ENCODE measurements at regions of chr7 and their contacts with region 1.

Region 1: DNA sequence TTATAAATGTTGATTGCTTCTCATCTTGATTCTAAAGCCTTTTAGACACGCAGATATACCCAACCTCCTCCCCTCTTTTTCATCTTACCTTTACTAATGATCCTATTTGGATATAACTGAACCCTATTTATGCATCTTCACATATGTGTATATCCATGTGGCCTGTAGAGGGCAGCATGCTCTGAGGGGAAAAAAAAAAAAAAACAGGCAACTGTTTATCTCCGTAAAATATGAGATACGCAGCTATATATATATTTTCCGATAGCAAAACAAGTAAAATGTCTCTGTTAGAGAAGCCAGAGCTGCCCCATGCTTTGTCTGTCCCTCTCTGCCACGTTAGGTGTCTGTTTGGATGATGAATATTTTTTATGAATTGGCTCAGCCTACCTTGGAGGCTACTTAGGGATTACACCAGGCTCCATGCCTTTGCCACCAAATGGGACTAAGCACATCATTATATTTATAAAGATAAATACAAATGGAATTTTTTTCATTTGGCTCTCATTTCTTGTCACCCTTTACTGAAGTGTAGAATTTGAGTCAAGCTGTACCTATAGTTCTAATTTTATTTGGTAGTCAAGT is 174.8 kb upstream of the FZD1 start:
- DNase-seq: peak; percentile 85
- H3K4me3 ChIP-seq: no peak overlapping the region
- H3K27ac ChIP-seq: peak overlapping the region; percentile 89
- H3K4me1 ChIP-seq: peaks cover 83% of the 10 kb centered on the region
- H3K27me3 ChIP-seq: no peaks in the 10 kb centered on the region
- CTCF ChIP-seq: peak; percentile 91

Region 2: DNA sequence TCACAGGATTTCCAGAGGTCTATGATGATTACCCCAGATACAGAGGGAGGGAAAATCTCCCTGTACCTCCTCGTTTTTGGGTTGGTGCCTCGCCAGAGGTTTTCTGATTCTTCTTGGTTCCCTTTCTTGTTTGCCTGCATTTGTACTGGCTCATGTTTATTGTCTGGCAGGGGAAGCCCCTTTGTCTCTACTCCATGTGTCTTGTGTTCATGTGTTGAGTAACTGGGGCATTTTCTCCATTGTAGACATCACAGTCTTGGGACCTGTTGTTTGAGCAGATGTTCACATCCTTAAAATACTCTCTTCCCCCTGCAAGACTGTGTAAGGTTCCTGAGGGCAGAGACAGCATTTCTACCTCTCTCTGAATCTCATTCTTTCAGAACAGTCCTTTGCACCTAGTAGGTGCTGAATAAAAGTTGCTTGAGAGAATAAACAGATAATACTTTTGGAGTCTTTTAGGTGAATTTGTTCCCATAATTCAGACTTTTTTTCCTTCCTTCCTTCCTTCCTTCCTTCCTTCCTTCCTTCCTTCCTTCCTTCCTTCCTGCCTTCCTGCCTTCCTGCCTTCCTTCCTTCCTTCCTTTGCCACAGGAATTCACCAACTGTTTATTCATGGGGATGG is 468.2 kb before region 1 on chr7:
- CTCF ChIA-PET with region 1: no interaction called
- POLR2A ChIA-PET with region 1: no interaction called
- intact Hi-C with region 1: loop called (anchors 1 kb)
- DNase-seq: peak; percentile 93
- H3K4me3 ChIP-seq: no peak overlapping the region
- H3K27ac ChIP-seq: peak overlapping the region; percentile 97
- H3K4me1 ChIP-seq: peaks cover 97% of the 10 kb centered on the region
- H3K27me3 ChIP-seq: no peaks in the 10 kb centered on the region
- CTCF ChIP-seq: no peak

Region 3: GRCh38 chr7:91264046-91264923 is 174.8 kb after region 1 on chr7 and contains the start of gene FZD1:
- CTCF ChIA-PET with region 1: interaction called, 4 read pairs
- POLR2A ChIA-PET with region 1: no interaction called
- intact Hi-C with region 1: loop called (anchors 2 kb)
- DNase-seq: peak; percentile 100
- H3K4me3 ChIP-seq: peak within 1 kb of the TSS; percentile 92
- H3K27ac ChIP-seq: peak within 1 kb of the TSS; percentile 97
- H3K4me1 ChIP-seq: peaks cover 21% of the 10 kb centered on the region
- H3K27me3 ChIP-seq: no peaks in the 10 kb centered on the region
- CTCF ChIP-seq: no peak
- total RNA-seq, gene FZD1: 47.6 and 49.9 TPM in 2 replicates

Region 4: DNA sequence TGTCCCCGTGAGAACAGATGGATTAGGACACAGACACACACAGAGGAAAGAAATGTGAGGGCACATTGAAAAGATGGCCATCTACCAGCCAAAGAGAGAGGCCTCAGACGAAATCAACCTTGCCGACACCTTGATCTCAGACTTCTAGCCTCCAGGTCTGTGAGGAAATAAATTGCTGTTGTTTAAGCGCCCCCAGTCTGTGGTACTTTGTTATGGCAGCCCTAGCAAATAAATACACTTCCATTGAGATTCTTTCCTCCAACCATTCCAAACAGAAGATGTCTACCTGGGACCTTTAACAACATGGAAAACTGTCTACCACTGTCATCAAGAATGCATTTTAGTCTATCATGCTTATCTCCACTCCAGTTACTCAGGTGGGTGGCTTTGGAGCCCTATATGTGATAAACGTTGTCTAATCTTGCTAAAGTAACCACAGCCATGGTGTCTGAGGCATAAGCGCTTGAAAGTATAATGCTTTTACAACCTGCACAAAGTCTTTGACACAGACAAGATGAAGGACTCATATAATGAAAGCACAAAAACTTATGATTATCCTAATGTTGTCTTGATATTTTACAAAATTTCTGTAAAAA is 546.8 kb after region 1 on chr7:
- CTCF ChIA-PET with region 1: interaction called, 4 read pairs
- POLR2A ChIA-PET with region 1: no interaction called
- intact Hi-C with region 1: loop called (anchors 5 kb)
- DNase-seq: peak; percentile 67
- H3K4me3 ChIP-seq: no peak overlapping the region
- H3K27ac ChIP-seq: no peak overlapping the region
- H3K4me1 ChIP-seq: peaks cover 29% of the 10 kb centered on the region
- H3K27me3 ChIP-seq: no peaks in the 10 kb centered on the region
- CTCF ChIP-seq: peak; percentile 82

Region 5: DNA sequence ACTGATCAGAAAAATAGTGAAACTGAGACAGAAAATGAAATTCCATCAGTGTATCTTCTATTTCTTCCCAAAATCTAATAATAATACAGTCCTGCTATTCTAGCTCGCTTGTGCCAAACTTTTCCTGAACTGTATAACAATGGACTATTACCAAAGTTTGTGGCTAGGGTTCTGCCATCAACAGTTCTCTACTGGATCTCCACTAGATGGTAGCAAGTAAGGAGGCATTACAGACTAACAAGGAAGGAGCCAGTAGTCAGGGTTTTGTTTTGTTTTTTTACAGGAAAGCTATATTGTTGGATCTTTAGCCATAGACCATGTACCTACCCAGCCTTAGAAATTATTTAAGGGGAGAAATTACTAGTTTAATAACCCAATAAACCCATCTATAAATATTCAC is 780.2 kb after region 1 on chr7:
- CTCF ChIA-PET with region 1: interaction called, 8 read pairs
- POLR2A ChIA-PET with region 1: no interaction called
- intact Hi-C with region 1: loop called (anchors 1 kb)
- DNase-seq: peak; percentile 39
- H3K4me3 ChIP-seq: no peak overlapping the region
- H3K27ac ChIP-seq: peak overlapping the region; percentile 99
- H3K4me1 ChIP-seq: peaks cover 72% of the 10 kb centered on the region
- H3K27me3 ChIP-seq: no peaks in the 10 kb centered on the region
- CTCF ChIP-seq: peak; percentile 44

Measured in A673 (cell line).